ENCODE measurements at regions of chr17 and their contacts with region 1.

Region 1: GRCh38 chr17:3845621-3846441 is at the start of gene NCBP3:
- DNase-seq: peak; percentile 90
- H3K4me3 Mint-ChIP-seq: peak within 1 kb of the TSS; percentile 97
- H3K27ac Mint-ChIP-seq: peak within 1 kb of the TSS; percentile 97
- H3K4me1 Mint-ChIP-seq: peaks cover 16% of the 10 kb centered on the region
- H3K27me3 Mint-ChIP-seq: peaks cover 9% of the 10 kb centered on the region
- total RNA-seq, gene NCBP3: 54.2 and 56.0 TPM in 2 replicates

Region 2: GRCh38 chr17:3893003-3893719 is 47.3 kb after region 1 on chr17 and contains the start of gene CAMKK1:
- intact Hi-C with region 1: loop called (anchors 1 kb)
- DNase-seq: peak; percentile 90
- H3K4me3 Mint-ChIP-seq: peak within 1 kb of the TSS; percentile 82
- H3K27ac Mint-ChIP-seq: peak within 1 kb of the TSS; percentile 86
- H3K4me1 Mint-ChIP-seq: peaks cover 30% of the 10 kb centered on the region
- H3K27me3 Mint-ChIP-seq: no peaks in the 10 kb centered on the region
- total RNA-seq, gene CAMKK1: 6.1 and 7.8 TPM in 2 replicates

Region 3: GRCh38 chr17:4035081-4035680 is 189.3 kb after region 1 on chr17:
- intact Hi-C with region 1: no loop called
- DNase-seq: no peak
- H3K4me3 Mint-ChIP-seq: no peak overlapping the region
- H3K27ac Mint-ChIP-seq: no peak overlapping the region
- H3K4me1 Mint-ChIP-seq: no peaks in the 10 kb centered on the region
- H3K27me3 Mint-ChIP-seq: no peaks in the 10 kb centered on the region

Region 4: GRCh38 chr17:4407851-4408250 is 562.0 kb after region 1 on chr17:
- intact Hi-C with region 1: no loop called
- DNase-seq: no peak
- H3K4me3 Mint-ChIP-seq: no peak overlapping the region
- H3K27ac Mint-ChIP-seq: no peak overlapping the region
- H3K4me1 Mint-ChIP-seq: peaks cover 2% of the 10 kb centered on the region
- H3K27me3 Mint-ChIP-seq: no peaks in the 10 kb centered on the region